ENCODE measurements at regions of chr6 and their contacts with region 1.

Region 1: DNA sequence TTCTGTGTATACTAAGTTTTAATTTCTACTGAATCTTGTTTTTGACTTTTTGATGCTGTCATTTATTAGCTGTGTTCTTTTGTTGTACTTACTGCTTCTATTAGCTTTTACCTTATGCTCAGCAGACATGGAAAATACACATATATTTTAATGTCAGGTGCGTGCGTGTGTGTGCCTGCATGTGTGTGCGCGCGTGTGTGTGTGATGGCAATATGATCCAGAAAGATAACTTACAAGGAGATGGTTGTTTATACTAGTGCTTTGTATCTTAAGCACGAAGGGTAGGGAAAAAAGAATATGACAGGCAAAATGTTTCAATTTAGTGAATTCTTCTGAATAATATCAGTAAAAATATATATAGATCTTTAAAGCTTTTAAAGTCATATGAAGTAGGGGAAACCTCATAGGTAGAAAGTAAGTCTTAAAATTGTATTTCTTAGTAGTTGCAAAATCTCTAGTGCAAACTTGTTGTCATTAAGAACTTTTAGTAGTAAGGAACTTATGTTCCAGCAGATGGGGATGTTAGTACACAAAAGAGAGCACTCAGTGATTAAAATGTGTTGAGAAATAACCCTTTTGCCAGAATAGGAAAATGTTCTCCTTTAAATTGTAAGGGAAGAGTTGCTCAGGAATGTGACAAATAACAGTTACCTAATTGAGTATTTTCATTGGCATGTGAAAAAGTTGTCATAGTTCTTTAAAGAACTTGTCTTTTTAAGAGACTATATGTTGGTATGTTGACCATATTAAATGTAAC is 13.2 kb downstream of the QKI start:
- DNase-seq: no peak
- H3K4me3 ChIP-seq: peak overlapping the region in 1 of 4 donors; percentile 5
- H3K27ac ChIP-seq: no peak overlapping the region
- H3K4me1 ChIP-seq: peaks cover 68 to 97% (median 86%) of the 10 kb centered on the region in 4 donors
- H3K27me3 ChIP-seq: no peaks in the 10 kb centered on the region
- CTCF ChIP-seq: peak; percentile 39 to 49 (median 43)
- EP300 ChIP-seq: no peak
- POLR2A ChIP-seq: no peak

Region 2: DNA sequence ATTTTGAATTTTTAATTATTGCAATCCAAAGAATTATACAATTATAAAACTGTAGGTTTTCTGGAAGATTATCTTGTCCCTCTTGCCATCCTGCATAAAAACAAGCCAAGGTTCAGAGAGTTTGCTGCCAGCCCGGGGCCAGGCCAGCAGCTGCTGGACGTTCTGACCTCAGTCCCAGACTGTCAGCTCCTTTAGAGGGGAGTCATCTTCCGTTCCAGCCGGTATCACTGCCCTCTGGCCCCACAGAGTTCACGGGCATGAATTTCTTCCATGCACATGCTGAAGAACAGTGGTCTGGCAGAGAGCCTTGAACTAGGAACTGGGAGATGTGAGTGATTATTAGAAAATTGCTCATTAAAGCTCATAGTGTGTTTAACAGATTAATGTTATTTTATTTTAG is 143.5 kb before region 1 on chr6:
- intact Hi-C with region 1: no loop called
- DNase-seq: no peak
- H3K4me3 ChIP-seq: no peak overlapping the region
- H3K27ac ChIP-seq: no peak overlapping the region
- H3K4me1 ChIP-seq: no peaks in the 10 kb centered on the region
- H3K27me3 ChIP-seq: no peaks in the 10 kb centered on the region
- CTCF ChIP-seq: no peak
- EP300 ChIP-seq: no peak
- POLR2A ChIP-seq: no peak

Region 3: GRCh38 chr6:163554663-163555062 is 127.0 kb after region 1 on chr6:
- intact Hi-C with region 1: loop called (anchors 5 kb)
- DNase-seq: no peak
- H3K4me3 ChIP-seq: no peak overlapping the region
- H3K27ac ChIP-seq: no peak overlapping the region
- H3K4me1 ChIP-seq: peaks cover 6 to 11% (median 7%) of the 10 kb centered on the region in 4 donors
- H3K27me3 ChIP-seq: no peaks in the 10 kb centered on the region
- CTCF ChIP-seq: peak; percentile 34 to 58 (median 50)
- EP300 ChIP-seq: no peak
- POLR2A ChIP-seq: no peak

Region 4: GRCh38 chr6:163814494-163815364 is 387.1 kb after region 1 on chr6:
- intact Hi-C with region 1: loop called (anchors 10 kb)
- DNase-seq: peak; percentile 89
- H3K4me3 ChIP-seq: no peak overlapping the region
- H3K27ac ChIP-seq: no peak overlapping the region
- H3K4me1 ChIP-seq: peaks cover 5 to 8% (median 6%) of the 10 kb centered on the region in 4 donors
- H3K27me3 ChIP-seq: no peaks in the 10 kb centered on the region
- CTCF ChIP-seq: no peak
- EP300 ChIP-seq: no peak
- POLR2A ChIP-seq: no peak

Region 5: GRCh38 chr6:163956571-163957407 is 529.1 kb after region 1 on chr6:
- intact Hi-C with region 1: loop called (anchors 5 kb)
- DNase-seq: peak; percentile 93
- H3K4me3 ChIP-seq: no peak overlapping the region
- H3K27ac ChIP-seq: no peak overlapping the region
- H3K4me1 ChIP-seq: peaks cover 10 to 16% (median 14%) of the 10 kb centered on the region in 4 donors
- H3K27me3 ChIP-seq: no peaks in the 10 kb centered on the region
- CTCF ChIP-seq: peak; percentile 85 to 88 (median 86)
- EP300 ChIP-seq: no peak
- POLR2A ChIP-seq: no peak

Region 6: GRCh38 chr6:164106345-164106769 is 678.7 kb after region 1 on chr6:
- intact Hi-C with region 1: loop called (anchors 10 kb)
- DNase-seq: no peak
- H3K4me3 ChIP-seq: no peak overlapping the region
- H3K27ac ChIP-seq: no peak overlapping the region
- H3K4me1 ChIP-seq: peaks cover 9 to 25% (median 12%) of the 10 kb centered on the region in 4 donors
- H3K27me3 ChIP-seq: peaks cover 0 to 3% (median 0%) of the 10 kb centered on the region in 4 donors
- CTCF ChIP-seq: no peak
- EP300 ChIP-seq: no peak
- POLR2A ChIP-seq: no peak

Region 7: DNA sequence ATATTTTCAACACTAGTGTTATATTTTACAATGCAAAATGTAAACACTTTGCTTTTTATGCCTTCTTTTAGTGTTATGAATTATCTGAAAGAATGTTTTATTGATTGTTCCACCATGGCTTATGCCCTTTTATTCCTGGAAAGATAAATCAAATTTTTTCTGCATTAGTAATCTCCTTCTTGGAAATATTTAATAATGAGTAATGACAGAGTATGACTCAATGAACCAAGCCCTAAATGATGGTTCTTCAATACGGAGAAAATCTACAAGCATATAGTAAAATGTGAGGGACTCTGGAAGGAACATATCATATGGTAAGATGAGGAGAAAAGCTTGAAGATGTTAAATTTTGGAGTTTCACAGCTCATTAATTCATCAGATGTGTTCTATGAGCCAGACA is 952.1 kb after region 1 on chr6:
- intact Hi-C with region 1: no loop called
- DNase-seq: no peak
- H3K4me3 ChIP-seq: no peak overlapping the region
- H3K27ac ChIP-seq: no peak overlapping the region
- H3K4me1 ChIP-seq: no peaks in the 10 kb centered on the region
- H3K27me3 ChIP-seq: no peaks in the 10 kb centered on the region
- CTCF ChIP-seq: no peak
- EP300 ChIP-seq: no peak
- POLR2A ChIP-seq: no peak